Right cardiac atrium (tissue), 5 donors: ENCODE measurements at regions of chr1 and their contacts with region 1.

Region 1: GRCh38 chr1:179365320-179366092 is at the start of gene AXDND1:
- DNase-seq: peak; percentile 88 to 95 (median 95)
- ATAC-seq: peak; percentile 97 to 98
- H3K4me3 ChIP-seq: peak within 1 kb of the TSS; percentile 62
- H3K27ac ChIP-seq: peak within 1 kb of the TSS; percentile 89
- H3K4me1 ChIP-seq: no peaks in the 10 kb centered on the region
- H3K27me3 ChIP-seq: no peaks in the 10 kb centered on the region
- total RNA-seq, gene AXDND1: not detected

Region 2: GRCh38 chr1:179081687-179082332 is 283.7 kb before region 1 on chr1 and contains the start of gene TOR3A:
- intact Hi-C with region 1: loop called (anchors 2 to 5 kb)
- DNase-seq: peak; percentile 93 to 97 (median 97)
- ATAC-seq: peak; percentile 98 to 99
- H3K4me3 ChIP-seq: peak within 1 kb of the TSS; percentile 60
- H3K27ac ChIP-seq: peak within 1 kb of the TSS; percentile 42
- H3K4me1 ChIP-seq: peaks cover 4% of the 10 kb centered on the region
- H3K27me3 ChIP-seq: no peaks in the 10 kb centered on the region
- total RNA-seq, gene TOR3A: 11.8 to 12.5 (median 11.9) TPM

Region 3: DNA sequence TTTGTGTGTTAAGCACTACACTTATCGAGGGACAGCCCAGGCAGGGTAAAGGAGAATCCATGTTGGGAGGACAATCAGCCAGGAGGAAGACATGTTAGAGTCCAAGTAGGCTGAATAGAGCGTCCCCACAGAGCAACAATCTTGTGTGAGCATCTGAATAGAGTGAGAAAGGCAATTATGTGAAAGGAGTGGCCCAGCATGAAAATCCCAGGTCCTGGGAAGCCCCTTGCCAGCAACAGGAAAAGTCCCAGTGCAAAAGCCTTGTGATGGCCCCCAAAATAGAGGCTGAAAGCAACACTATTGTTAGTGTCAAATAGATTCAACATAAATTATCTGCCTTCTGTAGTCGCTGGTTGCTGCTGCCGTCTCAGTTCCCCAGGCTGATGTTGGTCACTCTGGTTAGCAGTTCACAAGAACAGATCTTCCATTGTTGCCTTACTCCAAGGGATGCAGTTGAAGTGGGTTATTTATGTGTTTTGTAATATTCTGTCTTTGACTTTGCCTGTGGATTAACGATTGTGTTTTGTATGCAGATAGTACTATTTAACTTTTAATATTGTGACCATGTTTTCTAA is 123.9 kb before region 1 on chr1:
- intact Hi-C with region 1: no loop called
- DNase-seq: no peak
- ATAC-seq: no peak
- H3K4me3 ChIP-seq: no peak overlapping the region
- H3K27ac ChIP-seq: no peak overlapping the region
- H3K4me1 ChIP-seq: no peaks in the 10 kb centered on the region
- H3K27me3 ChIP-seq: no peaks in the 10 kb centered on the region

Region 4: GRCh38 chr1:179251675-179252074 is 113.8 kb before region 1 on chr1:
- intact Hi-C with region 1: loop called in 2 of 4 experiments (anchors 5 kb)
- DNase-seq: no peak
- ATAC-seq: peak in 1 of 2 donors; percentile 67
- H3K4me3 ChIP-seq: no peak overlapping the region
- H3K27ac ChIP-seq: no peak overlapping the region
- H3K4me1 ChIP-seq: no peaks in the 10 kb centered on the region
- H3K27me3 ChIP-seq: no peaks in the 10 kb centered on the region

Region 5: GRCh38 chr1:179293340-179294327 is 71.9 kb before region 1 on chr1 and contains the start of gene SOAT1:
- intact Hi-C with region 1: loop called in 2 of 4 experiments (anchors 10 kb)
- DNase-seq: peak; percentile 97 to 99 (median 99)
- ATAC-seq: peak; percentile 99 to 100
- H3K4me3 ChIP-seq: peak within 1 kb of the TSS; percentile 70
- H3K27ac ChIP-seq: peak within 1 kb of the TSS; percentile 97
- H3K4me1 ChIP-seq: no peaks in the 10 kb centered on the region
- H3K27me3 ChIP-seq: no peaks in the 10 kb centered on the region
- total RNA-seq, gene SOAT1: 15.3 to 20.3 (median 18.5) TPM

Region 6: GRCh38 chr1:179425186-179425585 is 59.7 kb after region 1 on chr1:
- intact Hi-C with region 1: no loop called
- DNase-seq: no peak
- ATAC-seq: no peak
- H3K4me3 ChIP-seq: no peak overlapping the region
- H3K27ac ChIP-seq: no peak overlapping the region
- H3K4me1 ChIP-seq: no peaks in the 10 kb centered on the region
- H3K27me3 ChIP-seq: no peaks in the 10 kb centered on the region